ENCODE measurements at regions of chr12 and their contacts with region 1.

Region 1: GRCh38 chr12:53928054-53928835 is 10.4 kb upstream of the HOXC13 start:
- DNase-seq: no peak

Region 2: GRCh38 chr12:53867216-53868001 is 60.8 kb before region 1 on chr12:
- in situ Hi-C with region 1: loop called (anchors 10 kb)
- DNase-seq: peak; percentile 48